ENCODE measurements at regions of chr6 and their contacts with region 1.

Region 1: DNA sequence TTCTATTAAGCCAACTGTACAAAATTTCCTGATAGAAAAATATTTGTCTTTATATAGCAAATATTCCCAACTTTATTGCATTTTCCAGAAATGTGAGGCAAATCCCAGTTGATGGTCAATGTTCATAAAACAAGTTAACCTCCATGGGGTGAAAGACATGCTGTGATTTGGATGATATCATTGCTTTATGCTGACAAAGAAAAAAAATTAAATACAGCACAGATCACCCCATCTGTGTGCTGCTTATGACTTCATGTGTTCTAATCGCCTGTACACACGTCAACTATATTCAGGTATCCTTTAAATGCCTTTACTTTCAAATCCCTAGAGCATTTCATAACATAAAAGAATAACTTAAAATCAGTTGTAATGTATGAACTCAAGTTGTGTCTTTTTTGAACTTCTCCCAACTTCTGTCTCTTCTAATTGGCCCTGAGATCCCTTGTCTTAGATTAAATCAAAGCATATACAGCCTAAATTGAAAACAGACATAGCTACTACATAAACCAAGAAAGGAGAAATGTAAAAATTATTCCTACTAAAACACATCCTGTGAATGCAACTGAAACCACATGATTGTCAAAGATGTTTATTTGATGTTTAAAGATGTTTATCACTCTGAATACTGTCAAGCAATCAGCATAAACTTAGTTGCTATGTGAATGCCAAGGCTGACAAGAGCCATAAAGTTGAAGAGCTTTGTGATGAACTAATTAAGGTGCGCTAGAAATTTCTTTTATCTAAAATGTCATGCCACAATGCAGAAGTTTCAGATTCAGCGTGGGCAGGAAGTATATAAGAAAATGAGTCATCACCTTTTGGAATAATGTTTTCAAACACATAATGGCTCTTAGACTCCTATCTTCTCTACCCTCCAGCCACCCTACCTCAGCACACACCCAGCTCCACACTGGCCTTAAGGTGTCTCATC is 68.7 kb downstream of the FILIP1 start:
- DNase-seq: no peak

Region 2: GRCh38 chr6:75488033-75488432 is 63.1 kb after region 1 on chr6:
- intact Hi-C with region 1: loop called in 1 of 2 experiments (anchors 10 kb)
- DNase-seq: no peak

Region 3: DNA sequence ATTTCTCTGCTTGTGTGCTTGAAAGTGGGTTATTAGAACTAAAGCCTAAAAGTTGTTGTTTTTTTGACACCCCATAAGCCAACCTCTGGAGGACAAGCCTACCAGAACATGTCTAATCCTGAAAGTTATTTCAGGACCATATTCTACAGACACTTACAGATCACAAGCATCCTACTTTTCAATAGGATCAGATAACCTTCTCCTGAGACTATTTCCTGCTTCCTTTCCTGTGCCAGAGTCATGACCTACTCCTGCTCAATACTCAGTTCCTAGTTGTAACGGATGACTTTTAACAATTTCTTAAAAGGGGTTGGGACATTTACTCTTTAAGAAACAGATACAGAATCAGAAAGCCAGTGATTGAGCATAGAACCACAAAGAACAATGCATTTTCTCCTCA is 74.0 kb after region 1 on chr6:
- intact Hi-C with region 1: no loop called
- DNase-seq: no peak